CD8-positive, alpha-beta memory T cell (primary cell): ENCODE measurements at regions of chr7 and their contacts with region 1.

Region 1: GRCh38 chr7:87312215-87312865 is 33.1 kb upstream of the CROT start:
- DNase-seq: peak; percentile 36 to 80 (median 58)
- H3K4me3 ChIP-seq: no peak overlapping the region
- H3K4me3 Mint-ChIP-seq: no peak overlapping the region
- H3K27ac ChIP-seq: no peak overlapping the region
- H3K27ac Mint-ChIP-seq: peak overlapping the region in 1 of 8 donors; percentile 5
- H3K4me1 ChIP-seq: no peaks in the 10 kb centered on the region
- H3K4me1 Mint-ChIP-seq: peaks cover 6 to 9% (median 7%) of the 10 kb centered on the region in 3 donors
- H3K27me3 ChIP-seq: no peaks in the 10 kb centered on the region
- H3K27me3 Mint-ChIP-seq: peaks cover 0 to 4% of the 10 kb centered on the region in 2 donors

Region 2: DNA sequence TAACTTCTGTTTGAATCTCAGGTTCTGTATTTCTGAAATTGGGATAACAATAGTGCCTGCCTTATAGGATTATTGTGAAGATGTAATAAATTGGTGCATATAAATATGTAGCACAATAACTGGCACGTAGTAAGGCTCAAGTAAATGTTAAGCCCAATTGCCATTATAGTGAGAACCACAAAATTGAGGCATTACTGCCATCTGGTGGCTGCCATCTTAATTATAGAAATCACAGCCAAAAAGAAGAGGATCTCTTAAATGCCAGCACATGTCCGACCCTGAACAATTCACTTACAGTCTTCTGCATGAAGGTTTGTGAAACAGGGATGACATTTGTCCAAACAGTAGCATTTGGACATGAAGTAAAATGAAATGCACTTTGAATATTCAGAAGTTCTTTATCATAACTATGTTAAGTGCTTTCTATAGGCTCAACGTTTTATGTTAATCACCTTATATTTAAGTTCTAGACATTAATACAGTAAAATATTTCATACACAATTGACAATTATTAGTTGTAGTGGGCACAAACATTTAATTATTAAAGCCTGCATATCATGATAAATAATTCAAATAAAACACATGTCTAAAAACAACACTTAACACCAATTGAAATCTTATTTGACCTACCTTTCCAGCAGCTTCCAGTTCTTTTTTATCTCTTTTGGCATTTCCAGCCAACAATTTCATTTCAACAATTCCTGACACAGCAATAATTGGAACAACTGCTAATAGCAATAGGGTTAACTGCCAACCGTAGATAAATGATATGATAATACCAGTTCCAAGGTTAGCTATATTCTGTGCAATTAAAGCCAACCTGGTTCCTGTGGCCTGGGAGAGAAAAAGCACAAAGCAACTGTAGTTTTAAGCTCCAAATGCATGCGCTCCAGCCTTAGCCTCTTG is 104.6 kb after region 1 on chr7:
- CTCF ChIA-PET with region 1: interaction called, 201 read pairs
- POLR2A ChIA-PET with region 1: interaction called, 3 read pairs
- DNase-seq: peak; percentile 54 to 70 (median 60)
- H3K4me3 ChIP-seq: no peak overlapping the region
- H3K4me3 Mint-ChIP-seq: no peak overlapping the region
- H3K27ac ChIP-seq: no peak overlapping the region
- H3K27ac Mint-ChIP-seq: no peak overlapping the region
- H3K4me1 ChIP-seq: no peaks in the 10 kb centered on the region
- H3K4me1 Mint-ChIP-seq: peaks cover 0 to 2% (median 0%) of the 10 kb centered on the region in 3 donors
- H3K27me3 ChIP-seq: no peaks in the 10 kb centered on the region
- H3K27me3 Mint-ChIP-seq: peaks cover 0 to 3% of the 10 kb centered on the region in 2 donors